ENCODE measurements at regions of chr6 and their contacts with region 1.

Region 1: DNA sequence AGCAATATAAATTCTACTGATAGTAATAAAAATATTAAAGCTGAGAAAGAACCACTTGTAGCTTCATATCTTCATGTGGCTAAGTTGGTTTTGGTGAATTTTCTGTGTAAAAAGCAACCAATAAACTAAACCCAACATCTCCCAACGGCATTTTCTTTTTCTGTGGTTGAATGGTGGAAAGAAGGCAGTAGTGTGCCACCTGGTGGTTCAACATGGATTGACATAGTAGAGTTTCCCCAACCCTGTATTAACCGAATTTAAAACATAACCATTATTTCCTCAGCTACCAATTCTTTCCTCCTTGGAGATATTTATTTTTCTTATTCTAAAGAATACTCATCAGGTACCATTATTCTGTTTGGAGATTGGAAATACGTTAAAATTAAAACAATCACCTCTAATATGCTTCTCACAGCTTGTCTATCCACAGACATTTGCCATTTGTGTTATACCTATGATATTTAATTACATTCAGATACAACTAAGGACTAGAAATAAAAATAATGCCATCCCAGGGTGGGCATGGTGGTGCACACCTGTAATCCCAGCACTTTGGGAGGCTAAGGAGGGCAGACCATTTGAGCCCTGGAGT is 117.1 kb upstream of the EEF1E1 start:
- DNase-seq: peak; percentile 43
- H3K4me3 ChIP-seq: no peak overlapping the region
- H3K27ac ChIP-seq: no peak overlapping the region
- H3K4me1 ChIP-seq: no peaks in the 10 kb centered on the region
- CTCF ChIP-seq: peak; percentile 88

Region 2: DNA sequence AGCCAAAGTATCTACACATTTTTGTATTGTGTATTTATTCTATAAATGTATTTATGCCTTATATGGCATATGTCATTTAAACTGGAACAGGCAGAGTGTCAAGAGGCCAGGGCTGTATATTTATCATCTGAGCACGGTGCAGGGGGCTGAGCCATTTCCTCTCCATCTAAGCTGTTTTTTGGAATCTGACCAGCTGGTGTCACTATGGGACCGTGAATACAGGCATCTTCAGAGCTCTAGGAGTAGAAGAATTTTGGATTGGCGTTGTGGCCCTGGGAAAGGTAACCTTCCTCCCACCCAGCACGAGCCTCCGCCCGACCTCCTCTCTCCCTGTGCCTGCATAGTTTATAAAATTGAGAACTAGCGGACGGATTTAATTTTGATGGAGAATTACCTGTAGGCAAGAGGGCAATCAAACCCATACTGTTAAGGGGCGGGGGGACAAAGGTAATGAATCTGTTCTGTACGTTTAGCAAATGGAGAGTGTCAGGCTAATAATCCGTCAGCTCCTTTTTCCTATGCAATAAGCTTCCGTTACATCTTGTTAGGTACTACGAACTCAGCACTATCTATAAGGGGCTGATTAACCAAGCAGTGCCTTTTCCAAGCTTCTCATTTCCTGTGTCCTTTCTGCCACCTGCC is 88.1 kb before region 1 on chr6:
- CTCF ChIA-PET with region 1: interaction called, 8 read pairs
- POLR2A ChIA-PET with region 1: no interaction called
- intact Hi-C with region 1: loop called (anchors 1 kb)
- DNase-seq: peak; percentile 49
- H3K4me3 ChIP-seq: no peak overlapping the region
- H3K27ac ChIP-seq: no peak overlapping the region
- H3K4me1 ChIP-seq: no peaks in the 10 kb centered on the region
- CTCF ChIP-seq: peak; percentile 80

Region 3: DNA sequence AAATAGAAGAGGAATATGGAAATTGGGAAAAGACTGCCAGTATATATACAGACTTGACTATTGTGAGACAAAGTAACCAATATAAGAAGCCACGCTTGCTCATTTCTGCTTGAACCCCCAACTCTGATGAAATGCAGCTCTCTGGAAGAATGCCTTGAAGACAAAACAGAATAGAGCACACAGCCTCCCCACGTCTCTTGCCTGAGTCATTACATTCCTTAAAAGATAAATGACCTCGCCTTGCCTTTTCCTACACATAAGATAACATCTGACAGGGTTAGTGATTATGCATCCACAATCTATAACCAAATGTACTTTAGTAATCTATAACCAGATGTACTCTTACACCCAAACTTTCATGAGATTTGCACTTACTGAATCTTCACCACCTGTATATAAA is 24.0 kb after region 1 on chr6:
- CTCF ChIA-PET with region 1: no interaction called
- POLR2A ChIA-PET with region 1: no interaction called
- intact Hi-C with region 1: no loop called
- DNase-seq: no peak
- H3K4me3 ChIP-seq: no peak overlapping the region
- H3K27ac ChIP-seq: no peak overlapping the region
- H3K4me1 ChIP-seq: no peaks in the 10 kb centered on the region
- CTCF ChIP-seq: no peak